Vagina (tissue), 2 donors: ENCODE measurements at regions of chr10 and their contacts with region 1.

Region 1: DNA sequence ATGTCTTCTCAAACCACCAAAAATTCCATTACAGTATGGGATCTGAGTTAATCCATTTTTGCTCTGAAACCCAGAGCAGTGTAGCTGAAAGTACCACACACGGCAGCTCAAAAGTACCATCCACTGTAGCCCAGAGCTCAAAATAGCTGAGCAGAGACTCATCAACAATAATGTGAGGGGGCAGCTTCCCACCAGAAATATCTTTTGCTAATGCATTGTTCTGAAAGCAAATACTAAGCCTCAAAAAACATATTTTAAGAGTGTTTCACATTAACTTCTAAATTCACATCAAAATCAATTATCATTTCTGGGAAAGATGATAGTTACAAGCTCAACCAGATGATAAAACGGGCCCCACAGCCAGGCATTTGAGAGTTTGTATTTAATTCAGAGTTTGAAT is 73.7 kb downstream of the ABLIM1 start:
- DNase-seq: no peak
- H3K4me3 ChIP-seq: no peak overlapping the region
- H3K27ac ChIP-seq: no peak overlapping the region
- H3K4me1 ChIP-seq: no peaks in the 10 kb centered on the region
- H3K27me3 ChIP-seq: no peaks in the 10 kb centered on the region
- CTCF ChIP-seq: no peak
- POLR2A ChIP-seq: no peak

Region 2: DNA sequence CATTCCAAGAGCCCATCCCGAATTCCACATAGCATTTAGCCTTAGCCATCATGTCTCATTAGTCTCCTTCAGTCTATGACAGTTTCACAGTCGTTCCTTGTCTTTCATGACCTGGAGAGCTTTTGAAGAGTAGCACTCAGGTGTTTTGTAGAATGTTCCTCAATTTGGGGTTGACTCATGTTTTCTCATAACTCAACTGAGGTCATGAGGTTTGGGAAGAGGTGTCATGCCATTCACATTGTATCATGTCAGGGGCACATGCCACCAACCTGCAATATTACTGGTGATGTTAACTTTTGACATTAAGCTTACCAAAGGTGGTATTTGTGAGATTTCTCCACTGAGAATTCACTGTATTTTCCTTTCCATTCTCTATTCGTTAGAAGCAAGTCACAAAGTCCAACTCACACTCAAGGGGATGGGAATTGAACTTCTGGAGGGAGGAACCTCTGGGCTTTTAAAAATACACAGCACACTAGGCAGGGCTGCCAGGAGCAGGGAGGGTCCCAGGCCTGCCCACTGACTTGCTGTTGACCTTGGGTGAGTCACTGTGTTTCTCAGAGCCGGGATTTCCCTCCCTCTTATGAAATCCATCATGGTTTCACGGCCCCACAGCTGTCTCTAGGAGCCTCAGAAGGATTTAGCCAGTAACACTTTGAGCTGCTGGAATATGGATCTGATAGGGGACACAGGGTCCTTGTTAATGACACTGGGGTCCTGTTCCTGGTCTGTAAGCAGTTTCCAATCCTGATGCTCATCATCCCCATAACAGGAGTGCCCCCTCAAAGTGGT is 1708.7 kb before region 1 on chr10:
- intact Hi-C with region 1: no loop called
- DNase-seq: no peak
- H3K4me3 ChIP-seq: no peak overlapping the region
- H3K27ac ChIP-seq: no peak overlapping the region
- H3K4me1 ChIP-seq: no peaks in the 10 kb centered on the region
- H3K27me3 ChIP-seq: no peaks in the 10 kb centered on the region
- CTCF ChIP-seq: no peak
- POLR2A ChIP-seq: no peak

Region 3: DNA sequence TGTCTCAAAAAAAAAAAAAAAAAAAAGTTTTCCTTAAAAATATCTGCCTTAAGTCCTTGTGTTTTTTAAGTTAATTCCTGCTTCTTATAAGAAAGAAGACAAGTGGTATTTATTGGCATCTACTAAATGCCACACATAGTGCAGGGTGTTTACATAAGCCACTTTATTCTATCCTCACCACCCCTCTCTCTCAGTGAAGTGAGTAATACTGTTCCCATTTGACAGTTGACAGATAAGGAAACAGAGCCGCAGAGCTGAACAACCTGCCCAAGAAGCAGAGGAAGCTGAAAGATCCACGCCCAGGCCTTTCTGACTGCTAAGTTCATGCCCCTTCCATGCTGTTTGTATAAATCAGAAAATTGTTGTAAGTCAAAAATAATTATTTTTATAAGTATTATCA is 19.5 kb after region 1 on chr10:
- intact Hi-C with region 1: loop called (anchors 2 kb)
- DNase-seq: no peak
- H3K4me3 ChIP-seq: no peak overlapping the region
- H3K27ac ChIP-seq: no peak overlapping the region
- H3K4me1 ChIP-seq: peaks cover 17% of the 10 kb centered on the region
- H3K27me3 ChIP-seq: no peaks in the 10 kb centered on the region
- CTCF ChIP-seq: no peak
- POLR2A ChIP-seq: no peak